PC-3 (cell line): ENCODE measurements at regions of chr22 and their contacts with region 1.

Region 1: DNA sequence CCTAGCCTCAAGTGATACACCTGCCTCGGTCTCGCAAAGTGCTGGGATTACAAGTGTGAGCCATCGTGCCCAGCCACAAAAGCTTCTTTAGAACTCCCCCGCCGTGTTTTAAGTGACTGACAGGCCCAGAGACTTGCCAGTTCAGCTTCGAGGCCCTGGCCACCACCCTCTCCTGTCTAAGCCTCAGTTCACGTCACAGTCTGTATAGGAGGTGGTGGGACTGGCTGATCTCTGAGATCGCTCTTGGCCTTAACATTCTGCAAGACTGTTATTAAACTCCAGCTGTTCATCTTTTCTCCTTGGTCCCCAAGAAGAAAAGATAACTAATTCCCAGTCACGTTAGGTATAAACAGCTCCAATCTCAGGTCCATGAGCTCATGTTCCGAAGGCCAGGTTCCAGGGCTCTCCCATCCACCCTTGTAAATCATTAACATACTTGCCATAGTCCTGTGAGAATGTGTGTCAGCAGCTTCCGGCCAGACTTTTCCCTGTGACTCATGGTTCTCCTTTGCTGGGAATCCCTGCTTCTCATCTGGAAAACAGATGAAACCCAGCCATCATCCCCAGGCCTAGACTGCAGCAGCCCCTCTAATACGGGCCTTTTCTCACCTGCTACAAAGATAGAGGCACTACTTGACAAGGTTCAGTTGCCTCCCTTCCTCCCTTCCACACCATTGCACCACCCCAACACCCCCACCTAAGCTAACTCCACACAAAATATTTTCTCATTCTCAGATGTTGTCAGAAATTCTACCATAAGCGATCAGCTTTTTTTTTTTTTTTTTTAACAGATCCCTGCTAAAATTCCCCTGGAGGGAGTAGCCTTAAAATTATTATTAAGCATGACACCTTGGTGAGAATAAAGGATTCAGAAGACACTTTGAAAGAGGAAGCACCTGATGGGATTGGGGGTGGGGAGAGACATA is 5.6 kb upstream of the KIAA0930 start:
- DNase-seq: peak; percentile 85
- ATAC-seq: peak; percentile 84
- H3K4me3 ChIP-seq: peak overlapping the region; percentile 40; the same call in 1 of the 2 replicates
- H3K27ac ChIP-seq: peak overlapping the region; percentile 99
- H3K4me1 ChIP-seq: peaks cover 27% of the 10 kb centered on the region
- H3K27me3 ChIP-seq: no peaks in the 10 kb centered on the region
- CTCF ChIP-seq: no peak

Region 2: GRCh38 chr22:44931077-44931540 is 315.2 kb before region 1 on chr22:
- CTCF ChIA-PET with region 1: no interaction called
- POLR2A ChIA-PET with region 1: no interaction called
- intact Hi-C with region 1: no loop called
- DNase-seq: no peak
- ATAC-seq: no peak
- H3K4me3 ChIP-seq: no peak overlapping the region
- H3K27ac ChIP-seq: no peak overlapping the region
- H3K4me1 ChIP-seq: no peaks in the 10 kb centered on the region
- H3K27me3 ChIP-seq: peaks cover 14% of the 10 kb centered on the region
- CTCF ChIP-seq: no peak

Region 3: DNA sequence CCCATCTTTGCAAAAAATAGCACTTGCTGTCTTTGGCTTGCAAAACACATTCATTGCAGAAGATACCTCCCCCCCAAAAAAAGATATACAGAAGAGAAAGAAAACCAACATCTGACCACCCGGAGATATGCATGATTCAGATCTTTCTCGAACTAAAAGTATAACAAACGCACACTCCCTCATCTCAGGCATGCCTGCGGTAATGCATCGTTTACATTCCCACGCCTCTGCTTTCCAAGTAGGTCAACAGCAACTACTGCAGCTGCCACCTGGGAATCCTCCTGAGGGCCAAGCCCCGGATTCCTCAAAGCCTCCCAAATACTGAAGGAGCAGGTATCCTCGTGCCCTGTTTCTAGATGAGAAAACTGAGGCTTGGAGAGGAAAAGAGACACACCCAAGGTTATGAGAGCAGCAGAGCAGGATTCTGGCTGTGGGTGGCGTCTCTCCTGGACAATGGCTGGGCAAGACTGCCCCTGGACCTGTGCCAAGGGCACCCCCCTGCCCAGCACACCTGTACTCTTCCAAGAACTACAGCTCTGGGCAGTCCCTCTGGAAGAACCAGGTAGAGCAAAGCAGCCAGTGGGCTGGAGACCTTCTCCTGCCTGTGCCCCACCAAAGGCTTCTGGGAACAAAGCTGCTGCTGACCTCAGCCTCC is 44.5 kb before region 1 on chr22:
- CTCF ChIA-PET with region 1: no interaction called
- POLR2A ChIA-PET with region 1: no interaction called
- intact Hi-C with region 1: loop called (anchors 5 kb)
- DNase-seq: peak; percentile 89
- ATAC-seq: peak; percentile 71
- H3K4me3 ChIP-seq: peak overlapping the region; percentile 51; the same call in 1 of the 2 replicates
- H3K27ac ChIP-seq: peak overlapping the region; percentile 100
- H3K4me1 ChIP-seq: peaks cover 25% of the 10 kb centered on the region
- H3K27me3 ChIP-seq: no peaks in the 10 kb centered on the region
- CTCF ChIP-seq: no peak

Region 4: DNA sequence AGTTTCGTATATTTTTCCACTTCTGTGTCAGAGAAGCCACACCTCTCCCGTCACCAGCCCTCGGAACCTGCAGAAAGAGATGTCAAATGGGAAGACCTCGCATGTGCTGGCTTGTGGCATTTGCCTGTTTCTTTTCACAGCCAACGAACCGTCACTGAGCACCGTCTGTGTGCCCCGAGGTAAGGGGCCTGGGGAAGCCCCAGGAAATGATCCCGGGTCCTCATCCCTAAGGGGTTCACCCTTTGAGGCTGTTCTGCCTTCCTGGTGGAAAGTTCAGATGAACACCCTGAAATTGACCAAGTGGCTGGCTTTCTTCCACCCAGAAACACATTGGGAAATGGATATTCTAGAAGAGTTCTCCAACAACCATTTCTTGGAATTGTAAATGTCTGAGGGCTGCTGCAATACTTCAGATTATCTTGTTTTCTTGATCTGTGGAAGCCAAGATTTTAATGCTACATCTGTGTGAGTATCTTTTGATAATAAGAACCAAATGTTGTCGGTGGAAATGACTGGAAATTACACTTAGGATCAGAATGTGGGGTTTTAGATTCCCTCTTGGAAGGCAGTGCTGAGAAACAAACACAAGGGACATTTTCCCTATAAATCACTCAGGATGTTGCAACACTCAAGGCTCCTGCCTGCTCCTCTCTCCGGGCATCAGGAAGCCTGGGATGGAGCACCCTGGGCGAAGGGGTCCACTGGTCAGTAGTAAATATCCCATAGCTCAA is 204.8 kb after region 1 on chr22:
- CTCF ChIA-PET with region 1: no interaction called
- POLR2A ChIA-PET with region 1: no interaction called
- intact Hi-C with region 1: no loop called
- DNase-seq: no peak
- ATAC-seq: no peak
- H3K4me3 ChIP-seq: no peak overlapping the region
- H3K27ac ChIP-seq: no peak overlapping the region
- H3K4me1 ChIP-seq: no peaks in the 10 kb centered on the region
- H3K27me3 ChIP-seq: no peaks in the 10 kb centered on the region
- CTCF ChIP-seq: no peak